ENCODE measurements at regions of chr4 and their contacts with region 1.

Region 1: DNA sequence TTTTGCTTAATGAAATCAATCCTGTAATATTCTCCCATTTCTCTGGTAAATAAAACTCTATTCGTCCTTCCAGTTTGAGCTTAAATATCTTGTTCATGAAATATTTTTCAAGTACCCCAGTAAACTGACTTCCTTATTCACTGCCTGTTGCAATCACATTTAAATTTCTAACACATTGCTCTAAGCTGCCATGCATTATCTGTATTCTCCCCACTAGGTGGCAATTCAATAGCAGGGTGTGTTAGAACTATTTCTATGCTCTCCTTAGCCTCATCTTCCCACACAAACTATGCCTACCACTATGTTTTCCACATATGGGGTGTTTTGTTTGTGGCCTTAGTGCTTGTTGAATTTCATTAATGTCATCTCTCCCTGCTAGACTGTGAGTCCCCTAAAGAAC is 377.1 kb upstream of the HS3ST1 start:
- DNase-seq: peak; percentile 53
- ATAC-seq: peak; percentile 94
- H3K4me3 ChIP-seq: no peak overlapping the region
- H3K27ac ChIP-seq: no peak overlapping the region
- H3K4me1 ChIP-seq: no peaks in the 10 kb centered on the region
- H3K27me3 ChIP-seq: no peaks in the 10 kb centered on the region
- CTCF ChIP-seq: peak; percentile 46 to 80 (median 73); a peak in 5 of 6 replicates
- POLR2A ChIP-seq: no peak
- RAD21 ChIP-seq: peak; percentile 69

Region 2: GRCh38 chr4:11954093-11954492 is 148.3 kb after region 1 on chr4:
- CTCF ChIA-PET with region 1: interaction called, 4 read pairs
- POLR2A ChIA-PET with region 1: no interaction called
- RAD21 ChIA-PET with region 1: interaction called in 1 of 2 experiments, 4 read pairs
- intact Hi-C with region 1: loop called (anchors 1 kb)
- DNase-seq: peak; percentile 44
- ATAC-seq: peak; percentile 72
- H3K4me3 ChIP-seq: no peak overlapping the region
- H3K27ac ChIP-seq: no peak overlapping the region
- H3K4me1 ChIP-seq: peaks cover 0 to 10% of the 10 kb centered on the region in 2 experiments; a peak in 2 of 4 replicates
- H3K27me3 ChIP-seq: no peaks in the 10 kb centered on the region
- CTCF ChIP-seq: peak; percentile 56 to 71 (median 71); a peak in 5 of 6 replicates
- POLR2A ChIP-seq: no peak
- RAD21 ChIP-seq: peak; percentile 74

Region 3: GRCh38 chr4:12270546-12270945 is 464.7 kb after region 1 on chr4:
- CTCF ChIA-PET with region 1: no interaction called
- POLR2A ChIA-PET with region 1: no interaction called
- RAD21 ChIA-PET with region 1: no interaction called
- intact Hi-C with region 1: no loop called
- DNase-seq: no peak
- ATAC-seq: no peak
- H3K4me3 ChIP-seq: no peak overlapping the region
- H3K27ac ChIP-seq: no peak overlapping the region
- H3K4me1 ChIP-seq: no peaks in the 10 kb centered on the region
- H3K27me3 ChIP-seq: no peaks in the 10 kb centered on the region
- CTCF ChIP-seq: no peak
- POLR2A ChIP-seq: no peak
- RAD21 ChIP-seq: no peak

Region 4: GRCh38 chr4:12633053-12633651 is 827.3 kb after region 1 on chr4:
- CTCF ChIA-PET with region 1: interaction called, 13 read pairs
- POLR2A ChIA-PET with region 1: no interaction called
- RAD21 ChIA-PET with region 1: no interaction called
- intact Hi-C with region 1: loop called (anchors 1 kb)
- DNase-seq: peak; percentile 79
- ATAC-seq: peak; percentile 100
- H3K4me3 ChIP-seq: no peak overlapping the region
- H3K27ac ChIP-seq: no peak overlapping the region
- H3K4me1 ChIP-seq: 0 out of 4 replicates have a peak, but pooled peaks cover 0 to 5% of the 10 kb centered on the region in 2 experiments
- H3K27me3 ChIP-seq: no peaks in the 10 kb centered on the region
- CTCF ChIP-seq: peak; percentile 66 to 91 (median 87)
- POLR2A ChIP-seq: no peak
- RAD21 ChIP-seq: peak; percentile 95

Measured in HCT116 (cell line).